ENCODE measurements at regions of chr1 and their contacts with region 1.

Region 1: GRCh38 chr1:238340989-238341388 is 450.3 kb upstream of the ZP4 start:
- DNase-seq: no peak
- H3K4me3 Mint-ChIP-seq: no peak overlapping the region
- H3K27ac Mint-ChIP-seq: peak overlapping the region; percentile 24
- H3K4me1 Mint-ChIP-seq: peaks cover 21% of the 10 kb centered on the region
- H3K27me3 Mint-ChIP-seq: no peaks in the 10 kb centered on the region
- CTCF ChIP-seq: no peak

Region 2: DNA sequence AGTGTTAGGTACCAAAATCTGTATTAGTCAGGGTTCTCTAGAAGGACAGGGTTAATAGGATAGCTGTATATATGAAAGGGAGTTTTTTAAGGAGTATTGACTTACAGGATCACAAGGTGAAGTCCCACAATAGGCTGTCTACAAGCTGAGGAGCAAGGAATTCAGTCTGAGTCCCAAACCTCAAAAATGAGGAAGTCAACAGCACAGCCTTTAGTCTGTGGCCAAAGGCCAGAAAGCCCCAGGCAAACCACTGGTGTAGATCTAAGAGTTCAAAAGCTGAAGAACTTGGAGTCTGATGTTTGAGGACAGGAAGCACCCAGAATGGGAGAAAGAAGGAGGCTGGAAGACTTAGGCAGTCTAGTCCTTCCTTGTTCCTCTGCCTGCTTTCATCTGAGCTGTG is 557.9 kb after region 1 on chr1:
- CTCF ChIA-PET with region 1: no interaction called
- intact Hi-C with region 1: loop called (anchors 5 kb)
- DNase-seq: peak; percentile 76
- H3K4me3 Mint-ChIP-seq: no peak overlapping the region
- H3K27ac Mint-ChIP-seq: no peak overlapping the region
- H3K4me1 Mint-ChIP-seq: peaks cover 47% of the 10 kb centered on the region
- H3K27me3 Mint-ChIP-seq: no peaks in the 10 kb centered on the region
- CTCF ChIP-seq: no peak